Colonic mucosa (tissue), 4 donors: ENCODE measurements at regions of chr16 and their contacts with region 1.

Region 1: GRCh38 chr16:87410968-87411367 is 18.8 kb downstream of the MAP1LC3B start:
- DNase-seq: no peak
- H3K4me3 ChIP-seq: no peak overlapping the region
- H3K27ac ChIP-seq: no peak overlapping the region
- H3K4me1 ChIP-seq: no peaks in the 10 kb centered on the region
- H3K27me3 ChIP-seq: no peaks in the 10 kb centered on the region
- CTCF ChIP-seq: no peak

Region 2: GRCh38 chr16:87548046-87548445 is 137.1 kb after region 1 on chr16:
- intact Hi-C with region 1: loop called (anchors 5 kb)
- DNase-seq: no peak
- H3K4me3 ChIP-seq: no peak overlapping the region
- H3K27ac ChIP-seq: no peak overlapping the region
- H3K4me1 ChIP-seq: no peaks in the 10 kb centered on the region
- H3K27me3 ChIP-seq: no peaks in the 10 kb centered on the region
- CTCF ChIP-seq: no peak